Ovary (tissue), 10 donors: ENCODE measurements at regions of chr3 and their contacts with region 1.

Region 1: GRCh38 chr3:69791919-69792399 is 52.7 kb downstream of the MITF start:
- DNase-seq: no peak
- H3K4me3 ChIP-seq: no peak overlapping the region
- H3K27ac ChIP-seq: peak overlapping the region in 1 of 2 donors; percentile 24
- H3K4me1 ChIP-seq: peaks cover 5% of the 10 kb centered on the region
- H3K27me3 ChIP-seq: no peaks in the 10 kb centered on the region
- CTCF ChIP-seq: peak; percentile 21 to 83 (median 74)
- EP300 ChIP-seq: no peak
- POLR2A ChIP-seq: no peak

Region 2: GRCh38 chr3:69499899-69500421 is 292.0 kb before region 1 on chr3:
- intact Hi-C with region 1: no loop called
- DNase-seq: peak; percentile 25 to 69 (median 52)
- H3K4me3 ChIP-seq: no peak overlapping the region
- H3K27ac ChIP-seq: no peak overlapping the region
- H3K4me1 ChIP-seq: peaks cover 4% of the 10 kb centered on the region
- H3K27me3 ChIP-seq: no peaks in the 10 kb centered on the region
- CTCF ChIP-seq: no peak
- EP300 ChIP-seq: no peak
- POLR2A ChIP-seq: no peak

Region 3: GRCh38 chr3:69682878-69683806 is 108.8 kb before region 1 on chr3:
- intact Hi-C with region 1: loop called in 1 of 4 experiments (anchors 10 kb)
- DNase-seq: no peak
- H3K4me3 ChIP-seq: no peak overlapping the region
- H3K27ac ChIP-seq: no peak overlapping the region
- H3K4me1 ChIP-seq: no peaks in the 10 kb centered on the region
- H3K27me3 ChIP-seq: no peaks in the 10 kb centered on the region
- CTCF ChIP-seq: no peak
- EP300 ChIP-seq: no peak
- POLR2A ChIP-seq: no peak

Region 4: GRCh38 chr3:69691860-69692259 is 100.1 kb before region 1 on chr3:
- intact Hi-C with region 1: loop called (anchors 5 to 10 kb)
- DNase-seq: no peak
- H3K4me3 ChIP-seq: no peak overlapping the region
- H3K27ac ChIP-seq: no peak overlapping the region
- H3K4me1 ChIP-seq: no peaks in the 10 kb centered on the region
- H3K27me3 ChIP-seq: no peaks in the 10 kb centered on the region
- CTCF ChIP-seq: no peak
- EP300 ChIP-seq: no peak
- POLR2A ChIP-seq: no peak

Region 5: GRCh38 chr3:69745505-69745904 is 46.5 kb before region 1 on chr3:
- intact Hi-C with region 1: loop called in 2 of 4 experiments (anchors 1 to 5 kb)
- DNase-seq: no peak
- H3K4me3 ChIP-seq: peak overlapping the region; percentile 0
- H3K27ac ChIP-seq: peak overlapping the region in 1 of 2 donors; percentile 51
- H3K4me1 ChIP-seq: peaks cover 39% of the 10 kb centered on the region
- H3K27me3 ChIP-seq: no peaks in the 10 kb centered on the region
- CTCF ChIP-seq: no peak
- EP300 ChIP-seq: no peak
- POLR2A ChIP-seq: no peak

Region 6: DNA sequence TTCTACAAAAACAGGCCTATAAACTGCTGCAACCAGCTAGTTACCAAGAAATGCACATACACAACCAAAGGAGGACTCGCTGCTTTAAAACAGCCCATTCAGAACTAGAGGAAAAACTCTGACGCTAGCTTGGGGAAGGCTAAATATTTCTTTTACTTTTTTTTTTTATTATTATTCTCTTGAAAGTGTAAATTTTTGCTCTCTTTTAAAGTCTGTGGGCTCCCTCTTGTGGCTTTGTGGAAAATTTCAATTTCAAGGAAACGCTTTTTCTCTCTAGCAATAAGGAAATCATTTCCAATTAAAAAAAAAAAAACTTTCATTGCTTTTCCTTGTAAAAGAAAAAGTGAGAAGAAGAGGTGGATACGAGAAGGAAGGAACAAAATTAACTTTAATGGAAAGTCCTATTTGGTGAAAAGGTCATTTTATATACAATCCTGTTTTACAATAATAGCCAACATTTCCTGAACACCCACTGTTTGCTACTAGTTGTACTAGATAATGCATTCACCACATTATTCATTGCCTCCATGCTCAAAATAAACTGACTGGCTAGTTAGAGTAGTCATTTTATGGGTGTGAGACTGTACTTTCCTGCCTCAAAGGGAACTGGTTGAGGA is 156.4 kb after region 1 on chr3:
- intact Hi-C with region 1: loop called in 1 of 4 experiments (anchors 5 kb)
- DNase-seq: no peak
- H3K4me3 ChIP-seq: no peak overlapping the region
- H3K27ac ChIP-seq: no peak overlapping the region
- H3K4me1 ChIP-seq: no peaks in the 10 kb centered on the region
- H3K27me3 ChIP-seq: no peaks in the 10 kb centered on the region
- CTCF ChIP-seq: peak; percentile 20 to 47 (median 20)
- EP300 ChIP-seq: no peak
- POLR2A ChIP-seq: no peak